BJ (cell line): ENCODE measurements at regions of chr17 and their contacts with region 1.

Region 1: GRCh38 chr17:75601057-75602051 is 13.8 kb downstream of the MYO15B start:
- DNase-seq: no peak
- H3K4me3 ChIP-seq: no peak overlapping the region
- H3K27me3 ChIP-seq: no peaks in the 10 kb centered on the region
- CTCF ChIP-seq: peak; percentile 70

Region 2: GRCh38 chr17:75476271-75476671 is 125.1 kb before region 1 on chr17:
- CTCF ChIA-PET with region 1: no interaction called
- POLR2A ChIA-PET with region 1: no interaction called
- DNase-seq: no peak
- H3K4me3 ChIP-seq: no peak overlapping the region
- H3K27me3 ChIP-seq: no peaks in the 10 kb centered on the region
- CTCF ChIP-seq: no peak

Region 3: GRCh38 chr17:75589012-75589918 is 12.1 kb before region 1 on chr17:
- CTCF ChIA-PET with region 1: interaction called, 22 read pairs
- POLR2A ChIA-PET with region 1: no interaction called
- DNase-seq: no peak
- H3K4me3 ChIP-seq: peak overlapping the region; percentile 54
- H3K27me3 ChIP-seq: peaks cover 18% of the 10 kb centered on the region
- CTCF ChIP-seq: peak; percentile 41

Region 4: GRCh38 chr17:75614006-75614405 is 12.7 kb after region 1 on chr17:
- CTCF ChIA-PET with region 1: interaction called, 37 read pairs
- POLR2A ChIA-PET with region 1: no interaction called
- DNase-seq: no peak
- H3K4me3 ChIP-seq: no peak overlapping the region
- H3K27me3 ChIP-seq: no peaks in the 10 kb centered on the region
- CTCF ChIP-seq: no peak